Breast epithelium (tissue), 4 donors: ENCODE measurements at regions of chrX and their contacts with region 1.

Region 1: DNA sequence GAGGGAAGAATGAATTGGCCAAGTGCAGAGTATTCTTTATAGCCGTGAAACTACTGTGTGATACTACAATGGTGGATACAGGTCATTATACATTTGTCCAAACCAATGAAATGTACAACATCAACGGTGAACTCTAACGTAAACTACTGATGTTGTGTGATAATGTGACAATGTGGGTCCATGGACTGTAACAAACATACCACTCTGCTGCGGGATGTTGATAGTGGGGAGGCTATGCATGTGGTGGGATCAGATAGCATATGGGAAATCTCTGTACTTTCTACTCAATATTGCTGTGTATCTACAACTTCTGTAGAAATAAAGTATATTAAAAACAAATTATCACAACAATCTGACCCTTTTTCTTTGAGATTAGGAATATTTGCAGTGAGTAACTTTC is 101.1 kb downstream of the TEX13C start:
- DNase-seq: no peak
- H3K4me3 ChIP-seq: no peak overlapping the region
- H3K27ac ChIP-seq: no peak overlapping the region
- H3K4me1 ChIP-seq: no peaks in the 10 kb centered on the region
- H3K27me3 ChIP-seq: peaks cover 0 to 7% of the 10 kb centered on the region in 2 donors
- CTCF ChIP-seq: no peak
- POLR2A ChIP-seq: no peak

Region 2: GRCh38 chrX:124378643-124379042 is 1042.2 kb before region 1 on chrX:
- intact Hi-C with region 1: no loop called
- DNase-seq: no peak
- H3K4me3 ChIP-seq: no peak overlapping the region
- H3K27ac ChIP-seq: no peak overlapping the region
- H3K4me1 ChIP-seq: no peaks in the 10 kb centered on the region
- H3K27me3 ChIP-seq: peaks cover 0 to 12% of the 10 kb centered on the region in 2 donors
- CTCF ChIP-seq: no peak
- POLR2A ChIP-seq: no peak

Region 3: DNA sequence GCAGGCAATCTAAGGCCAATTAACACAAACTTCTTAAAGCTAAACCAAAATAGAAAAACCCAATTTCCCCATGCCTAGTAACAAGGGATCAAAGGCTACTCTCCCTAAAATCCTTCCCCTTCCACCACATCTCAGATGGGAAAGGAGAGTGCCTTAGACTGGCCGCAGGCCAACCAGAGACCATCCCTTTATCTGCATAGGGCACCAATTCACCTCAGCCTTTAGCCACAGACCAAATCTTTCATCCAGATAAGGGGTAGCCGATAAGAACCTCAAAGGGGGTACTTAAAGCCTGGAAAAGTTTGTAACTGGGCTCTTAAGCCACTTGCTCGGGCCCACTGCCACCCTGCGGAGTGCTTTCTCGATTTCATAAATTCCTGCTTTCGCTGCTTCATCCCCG is 32.9 kb before region 1 on chrX:
- intact Hi-C with region 1: no loop called
- DNase-seq: no peak
- H3K4me3 ChIP-seq: no peak overlapping the region
- H3K27ac ChIP-seq: no peak overlapping the region
- H3K4me1 ChIP-seq: no peaks in the 10 kb centered on the region
- H3K27me3 ChIP-seq: no peaks in the 10 kb centered on the region
- CTCF ChIP-seq: no peak
- POLR2A ChIP-seq: no peak

Region 4: DNA sequence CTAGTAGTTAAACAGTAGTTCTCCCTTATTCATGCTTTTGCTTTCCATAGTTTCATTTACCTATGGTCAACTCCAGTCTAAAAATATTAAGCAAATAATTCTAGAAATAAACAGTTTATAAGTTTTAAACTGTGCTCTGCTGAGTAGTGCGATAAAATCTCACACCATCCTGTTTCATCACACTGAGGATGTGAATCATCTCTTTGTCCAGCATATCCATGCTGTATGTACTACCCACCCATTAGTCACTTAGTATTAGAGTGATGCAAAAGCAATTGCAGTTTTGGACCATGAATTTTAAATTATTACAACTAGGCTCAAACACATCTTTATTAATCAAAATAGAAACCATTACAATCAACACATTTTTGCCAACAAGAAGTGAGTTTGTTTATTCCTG is 86.3 kb after region 1 on chrX:
- intact Hi-C with region 1: loop called (anchors 5 kb)
- DNase-seq: no peak
- H3K4me3 ChIP-seq: no peak overlapping the region
- H3K27ac ChIP-seq: no peak overlapping the region
- H3K4me1 ChIP-seq: no peaks in the 10 kb centered on the region
- H3K27me3 ChIP-seq: peaks cover 0 to 3% of the 10 kb centered on the region in 2 donors
- CTCF ChIP-seq: no peak
- POLR2A ChIP-seq: no peak